GM10248 (cell line): ENCODE measurements at regions of chr9 and their contacts with region 1.

Region 1: GRCh38 chr9:97510797-97511761 is 9.6 kb downstream of the TMOD1 start:
- DNase-seq: peak; percentile 62
- CTCF ChIP-seq: no peak

Region 2: DNA sequence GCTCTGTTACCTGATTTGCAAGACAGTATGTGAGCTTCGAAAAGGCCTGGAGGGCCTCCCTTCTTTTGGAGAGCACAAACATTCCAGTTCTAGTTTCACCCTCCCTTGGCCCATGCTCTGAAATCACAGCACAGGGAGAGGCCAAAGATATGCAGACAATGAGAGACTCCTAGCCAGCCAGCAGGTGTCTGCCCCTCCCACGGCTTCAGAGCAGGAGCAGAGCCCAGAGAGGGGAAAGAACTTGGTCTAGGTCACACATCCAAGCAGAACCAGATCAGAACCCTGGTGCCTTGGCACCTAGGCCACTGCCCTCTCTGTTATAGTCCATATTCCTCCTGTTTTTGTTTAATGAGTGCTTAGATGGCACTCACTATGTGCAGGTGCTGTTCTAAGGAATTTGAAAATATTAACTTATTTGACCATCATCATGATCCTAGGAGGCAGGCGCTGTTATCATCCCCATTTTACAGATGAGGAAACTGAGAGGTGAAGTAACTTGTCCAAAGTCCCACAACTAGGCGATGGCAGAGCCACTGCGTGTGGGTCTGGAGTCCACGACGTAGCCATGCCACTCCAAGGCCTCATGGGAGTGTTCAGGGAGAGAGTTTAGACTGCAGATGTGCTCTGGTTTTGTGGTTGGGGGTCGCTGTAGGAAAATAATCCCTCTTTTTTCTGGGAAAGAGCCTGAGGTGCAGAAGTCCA is 17.6 kb after region 1 on chr9:
- CTCF ChIA-PET with region 1: interaction called, 15 read pairs
- POLR2A ChIA-PET with region 1: no interaction called
- DNase-seq: peak; percentile 42
- CTCF ChIP-seq: no peak

Region 3: DNA sequence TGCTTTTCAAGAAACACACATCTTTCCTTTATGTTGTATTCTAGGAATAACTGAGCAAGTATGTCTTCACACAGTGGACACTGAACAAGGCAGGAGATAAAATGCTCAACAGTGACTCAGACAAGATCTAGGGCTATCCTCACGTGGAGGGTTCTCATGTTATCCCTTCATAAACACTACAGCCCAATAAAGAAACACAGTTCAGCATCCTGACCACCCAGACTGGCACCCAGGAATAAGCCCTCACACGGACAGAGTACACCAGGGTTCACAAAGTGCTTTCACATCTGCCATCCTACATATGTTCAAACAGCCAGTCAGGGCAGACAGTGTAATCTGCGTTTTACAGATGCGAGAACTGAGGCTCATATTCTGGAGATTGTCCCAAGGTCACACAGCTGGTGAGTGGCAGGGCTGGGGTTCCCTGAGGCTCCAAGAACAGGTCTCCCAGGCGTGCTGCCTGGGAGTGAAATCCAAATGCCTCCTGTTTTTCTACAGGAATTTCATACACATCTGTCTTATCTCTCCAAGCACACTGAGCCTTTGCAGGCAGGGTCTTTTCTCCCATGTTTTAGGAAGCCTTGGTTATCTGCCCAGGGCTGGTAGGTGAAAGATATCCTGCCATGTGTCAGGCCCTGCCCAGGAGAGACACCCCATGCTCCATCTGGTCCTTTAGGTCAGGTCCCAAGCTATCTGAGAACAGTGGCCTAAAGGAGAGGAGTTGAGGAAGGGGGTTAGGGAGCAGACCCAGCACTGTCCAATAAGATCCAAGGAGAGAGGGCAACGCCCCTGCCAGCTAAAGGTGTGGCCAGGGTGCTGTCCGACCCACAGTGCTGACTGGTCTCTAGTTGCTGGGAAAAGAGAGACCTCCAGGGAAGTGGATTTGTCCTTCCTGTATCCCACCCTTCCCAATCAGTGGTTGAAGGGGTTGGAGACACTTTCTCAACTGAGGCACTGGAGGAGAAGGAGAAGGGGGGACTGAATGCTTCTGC is 233.9 kb after region 1 on chr9:
- CTCF ChIA-PET with region 1: no interaction called
- POLR2A ChIA-PET with region 1: no interaction called
- DNase-seq: no peak
- CTCF ChIP-seq: no peak